ENCODE measurements at regions of chr5 and their contacts with region 1.

Region 1: GRCh38 chr5:36305571-36306326 is 4.0 kb upstream of the RANBP3L start:
- DNase-seq: peak; percentile 51
- H3K4me3 Mint-ChIP-seq: no peak overlapping the region
- H3K27ac Mint-ChIP-seq: no peak overlapping the region
- H3K4me1 Mint-ChIP-seq: peaks cover 13% of the 10 kb centered on the region
- H3K27me3 Mint-ChIP-seq: peaks cover 2% of the 10 kb centered on the region

Region 2: DNA sequence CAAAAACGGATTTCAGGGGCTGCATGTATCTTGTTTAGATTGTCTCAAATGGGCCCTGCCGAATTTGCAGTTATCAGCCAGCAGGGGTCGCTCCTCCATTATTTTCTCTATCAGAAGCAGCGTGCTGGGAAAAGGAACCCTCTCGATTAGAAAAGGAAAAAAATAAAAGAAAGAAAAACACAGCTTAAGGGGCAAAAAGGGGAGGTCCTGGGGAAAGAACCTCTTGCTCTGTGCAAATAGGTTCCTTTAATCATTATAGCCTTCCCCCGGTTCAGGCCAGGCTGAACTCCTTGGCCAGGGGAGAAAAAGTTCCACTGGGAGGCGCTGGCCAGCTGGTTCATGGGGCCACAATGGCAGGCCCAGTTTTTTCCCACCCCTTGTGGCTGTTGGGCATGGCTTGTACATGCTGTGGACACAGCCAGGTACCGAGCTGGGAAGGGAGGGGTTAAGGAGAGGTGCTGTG is 342.3 kb before region 1 on chr5:
- CTCF ChIA-PET with region 1: no interaction called
- intact Hi-C with region 1: loop called (anchors 1 kb)
- DNase-seq: peak; percentile 35
- H3K4me3 Mint-ChIP-seq: no peak overlapping the region
- H3K27ac Mint-ChIP-seq: no peak overlapping the region
- H3K4me1 Mint-ChIP-seq: no peaks in the 10 kb centered on the region
- H3K27me3 Mint-ChIP-seq: peaks cover 15% of the 10 kb centered on the region